ENCODE measurements at regions of chr10 and their contacts with region 1.

Region 1: DNA sequence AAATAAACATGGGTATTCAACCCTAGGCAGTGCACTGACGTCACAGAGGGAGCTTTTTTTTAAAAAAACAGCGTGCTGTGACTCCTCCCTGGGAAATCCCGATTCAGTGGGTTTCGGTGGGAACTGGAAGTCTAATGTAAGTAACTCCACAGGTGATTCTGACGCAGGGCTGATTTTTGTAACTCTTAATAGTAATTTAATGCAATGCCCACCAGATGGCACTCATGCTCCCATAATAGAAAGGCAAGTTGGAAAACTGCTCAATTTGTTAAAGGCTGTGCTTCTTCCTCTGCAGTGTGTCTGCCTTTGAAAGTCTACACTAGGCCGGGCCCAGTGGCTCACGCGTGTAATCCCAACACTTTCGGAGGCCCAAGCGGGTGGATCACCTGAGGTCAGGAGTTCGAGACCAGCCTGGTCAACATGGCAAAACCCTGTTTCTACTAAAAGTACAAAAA is 10.9 kb upstream of the RSU1 start:
- DNase-seq: peak; percentile 22 to 85 (median 28)
- ATAC-seq: peak; percentile 87
- H3K4me3 ChIP-seq: no peak overlapping the region
- H3K27ac ChIP-seq: no peak overlapping the region
- H3K4me1 ChIP-seq: no peaks in the 10 kb centered on the region; a peak in 1 of 5 replicates
- H3K27me3 ChIP-seq: no peaks in the 10 kb centered on the region; a peak in 1 of 5 replicates
- CTCF ChIP-seq: peak; percentile 60 to 77 (median 60)
- EP300 ChIP-seq: no peak
- POLR2A ChIP-seq: no peak
- RAD21 ChIP-seq: peak; percentile 64 to 78

Region 2: GRCh38 chr10:17474595-17475323 is 646.6 kb after region 1 on chr10:
- CTCF ChIA-PET with region 1: no interaction called
- POLR2A ChIA-PET with region 1: no interaction called
- in situ Hi-C with region 1: loop called (anchors 25 kb)
- intact Hi-C with region 1: no loop called
- DNase-seq: peak; percentile 30 to 76 (median 50)
- ATAC-seq: peak; percentile 69
- H3K4me3 ChIP-seq: peak overlapping the region; percentile 26
- H3K27ac ChIP-seq: no peak overlapping the region; the same call in 1 of the 3 replicates
- H3K4me1 ChIP-seq: peaks cover 3 to 12% of the 10 kb centered on the region in 2 experiments; a peak in 2 of 5 replicates
- H3K27me3 ChIP-seq: no peaks in the 10 kb centered on the region
- CTCF ChIP-seq: peak; percentile 41 to 69 (median 46); a peak in 4 of 6 replicates
- EP300 ChIP-seq: no peak
- POLR2A ChIP-seq: no peak
- RAD21 ChIP-seq: peak; percentile 36 to 56; a peak in 3 of 4 replicates

Region 3: DNA sequence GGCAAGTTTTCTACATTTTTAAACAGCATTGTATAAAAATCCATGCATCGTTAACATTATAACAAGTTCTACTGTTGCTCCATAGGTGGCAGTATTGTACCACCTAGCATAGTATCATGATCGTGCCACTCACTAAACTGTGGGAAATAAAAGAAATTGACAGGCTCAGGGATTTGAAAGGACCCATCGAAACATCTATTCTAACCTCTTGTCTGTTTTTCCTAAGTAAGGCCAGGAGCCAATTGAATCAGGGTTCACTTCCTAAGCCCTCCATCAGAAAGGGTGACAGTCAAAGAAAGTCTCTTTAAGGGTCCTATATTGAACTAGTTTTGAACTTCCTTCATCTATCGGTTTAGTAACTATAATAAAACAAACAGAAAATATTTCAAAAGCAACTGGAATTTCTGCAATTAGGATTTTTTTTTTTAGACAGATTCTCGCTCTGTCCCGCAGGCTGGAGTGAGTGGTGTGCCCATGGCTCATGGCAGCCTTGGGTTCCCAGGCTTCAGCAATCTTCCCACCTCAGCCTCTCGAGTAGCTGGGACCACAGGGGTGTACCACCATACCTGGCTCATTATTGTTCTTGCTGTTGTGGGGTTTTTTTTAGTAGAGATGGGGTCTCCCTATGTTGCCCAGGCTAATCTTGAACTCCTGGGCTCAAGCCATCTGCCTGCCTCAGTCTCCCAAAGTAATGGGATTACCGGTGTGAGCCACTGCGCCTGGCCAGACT is 779.6 kb after region 1 on chr10:
- CTCF ChIA-PET with region 1: interaction called, 3 read pairs
- POLR2A ChIA-PET with region 1: no interaction called
- in situ Hi-C with region 1: loop called (anchors 10 kb)
- intact Hi-C with region 1: no loop called
- DNase-seq: peak; percentile 47 to 71 (median 52)
- ATAC-seq: peak; percentile 94
- H3K4me3 ChIP-seq: no peak overlapping the region
- H3K27ac ChIP-seq: no peak overlapping the region
- H3K4me1 ChIP-seq: peaks cover 0 to 2% of the 10 kb centered on the region in 2 experiments; a peak in 2 of 5 replicates
- H3K27me3 ChIP-seq: no peaks in the 10 kb centered on the region
- CTCF ChIP-seq: peak; percentile 69 to 90 (median 74)
- EP300 ChIP-seq: no peak
- POLR2A ChIP-seq: no peak
- RAD21 ChIP-seq: peak; percentile 90 to 95

Region 4: GRCh38 chr10:17872191-17873091 is 1044.3 kb after region 1 on chr10:
- CTCF ChIA-PET with region 1: interaction called, 3 read pairs
- POLR2A ChIA-PET with region 1: no interaction called
- in situ Hi-C with region 1: loop called (anchors 25 kb)
- intact Hi-C with region 1: no loop called
- DNase-seq: peak in 1 of 4 experiments; percentile 20
- ATAC-seq: 0 out of 3 replicates have a peak, but pooled peaks have one; percentile 38
- H3K4me3 ChIP-seq: no peak overlapping the region
- H3K27ac ChIP-seq: no peak overlapping the region
- H3K4me1 ChIP-seq: no peaks in the 10 kb centered on the region
- H3K27me3 ChIP-seq: no peaks in the 10 kb centered on the region; a peak in 1 of 5 replicates
- CTCF ChIP-seq: peak; percentile 29 to 70 (median 61); a peak in 5 of 6 replicates
- EP300 ChIP-seq: no peak
- POLR2A ChIP-seq: no peak
- RAD21 ChIP-seq: peak; percentile 76 to 85